ENCODE measurements at regions of chr14 and their contacts with region 1.

Region 1: DNA sequence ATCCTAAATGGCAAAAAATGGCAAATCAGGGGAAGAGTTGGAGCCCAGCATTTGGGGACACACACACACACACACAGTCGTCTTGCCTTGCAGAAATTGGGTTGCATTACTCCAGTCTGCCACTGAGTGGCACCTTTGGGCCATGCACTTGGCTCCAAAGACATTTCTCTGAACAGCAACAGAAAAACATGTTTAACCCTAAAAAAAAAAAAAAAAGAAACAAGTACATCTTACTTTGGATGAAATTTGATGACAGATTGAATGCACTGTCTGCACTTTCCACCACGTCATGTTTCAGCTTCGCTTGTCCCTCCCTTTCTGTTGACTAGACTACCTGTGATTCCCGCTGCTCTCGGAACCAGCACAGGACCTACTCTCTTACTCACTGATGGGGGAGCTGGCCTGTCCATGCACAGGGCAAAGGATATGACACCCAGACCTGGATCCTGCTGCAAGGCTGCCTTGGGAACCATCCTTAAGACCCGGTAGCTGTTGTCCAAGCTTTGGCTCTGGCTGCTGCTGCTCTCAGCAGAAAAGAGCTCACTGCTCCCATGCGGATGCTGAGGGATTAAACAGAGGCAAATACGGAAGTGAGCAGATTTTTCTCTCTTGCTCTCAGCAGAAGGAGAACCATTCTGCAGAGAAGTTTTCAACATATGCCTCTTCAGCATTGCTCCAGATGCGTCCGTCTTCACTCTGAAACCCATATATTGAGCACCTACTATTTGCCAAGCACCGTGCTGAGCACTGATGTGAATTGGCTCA is 376.8 kb downstream of the DPF3 start:
- DNase-seq: peak; percentile 23
- H3K4me3 ChIP-seq: no peak overlapping the region
- H3K27me3 ChIP-seq: peaks cover 1% of the 10 kb centered on the region; the same call in 1 of the 2 replicates
- CTCF ChIP-seq: peak; percentile 88

Region 2: GRCh38 chr14:72503696-72504368 is 13.3 kb before region 1 on chr14:
- CTCF ChIA-PET with region 1: interaction called, 43 read pairs
- POLR2A ChIA-PET with region 1: no interaction called
- DNase-seq: no peak
- H3K4me3 ChIP-seq: no peak overlapping the region
- H3K27me3 ChIP-seq: peaks cover under 1% of the 10 kb centered on the region; the same call in 1 of the 2 replicates
- CTCF ChIP-seq: no peak

Region 3: GRCh38 chr14:72893636-72894321 is 376.7 kb after region 1 on chr14 and contains the start of gene DPF3:
- CTCF ChIA-PET with region 1: interaction called, 44 read pairs
- POLR2A ChIA-PET with region 1: no interaction called
- DNase-seq: peak; percentile 77
- H3K4me3 ChIP-seq: peak within 1 kb of the TSS; percentile 56
- H3K27me3 ChIP-seq: no peaks in the 10 kb centered on the region
- CTCF ChIP-seq: no peak
- polyA plus RNA-seq, gene DPF3: 3.6 and 4.3 TPM in 2 replicates

Region 4: DNA sequence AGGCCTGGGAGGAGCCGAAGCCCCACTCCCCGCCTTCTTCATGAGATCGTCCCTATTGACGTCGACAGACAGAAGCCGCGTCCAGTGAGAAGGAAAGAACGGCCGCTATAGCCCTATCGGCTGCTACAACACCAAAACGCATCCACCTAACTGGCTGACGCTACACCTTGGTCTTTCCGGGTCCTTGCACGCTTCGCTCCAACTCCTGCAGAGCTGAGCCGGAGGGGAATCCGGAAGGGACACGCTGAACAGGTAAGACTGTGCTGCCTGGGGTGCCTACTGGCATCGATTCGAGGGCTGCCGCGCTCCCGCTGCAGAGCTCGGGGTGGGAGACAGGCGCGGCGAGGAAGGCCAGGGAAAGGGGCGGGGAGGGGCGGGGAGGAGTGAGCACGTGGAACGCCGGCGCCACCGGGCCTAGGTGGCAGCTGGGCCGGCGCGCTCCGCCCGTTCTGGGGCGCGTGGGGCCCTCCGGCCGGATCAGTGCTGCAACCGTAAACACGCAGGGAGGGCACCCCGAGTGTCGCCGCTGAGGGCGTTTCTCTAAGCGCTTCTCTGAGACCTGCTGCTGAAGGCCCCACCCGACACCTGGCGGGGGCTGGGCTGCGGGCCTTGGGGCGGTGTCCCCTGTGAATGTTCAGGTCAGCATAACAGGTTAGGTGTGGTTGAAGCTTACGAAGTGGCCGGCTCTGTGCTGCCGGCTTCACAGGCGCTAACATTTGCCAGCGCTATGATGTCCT is 409.3 kb after region 1 on chr14 and contains the start of gene DCAF4:
- CTCF ChIA-PET with region 1: interaction called, 21 read pairs
- POLR2A ChIA-PET with region 1: no interaction called
- DNase-seq: peak; percentile 94
- H3K4me3 ChIP-seq: peak within 1 kb of the TSS; percentile 99
- H3K27me3 ChIP-seq: no peaks in the 10 kb centered on the region
- CTCF ChIP-seq: no peak
- polyA plus RNA-seq, gene DCAF4: 22.9 and 29.2 TPM in 2 replicates

Region 5: GRCh38 chr14:72948481-72949138 is 431.5 kb after region 1 on chr14:
- CTCF ChIA-PET with region 1: interaction called, 292 read pairs
- POLR2A ChIA-PET with region 1: no interaction called
- DNase-seq: no peak
- H3K4me3 ChIP-seq: no peak overlapping the region
- H3K27me3 ChIP-seq: no peaks in the 10 kb centered on the region
- CTCF ChIP-seq: peak; percentile 86

Region 6: GRCh38 chr14:72962829-72963312 is 445.8 kb after region 1 on chr14:
- CTCF ChIA-PET with region 1: interaction called, 13 read pairs
- POLR2A ChIA-PET with region 1: no interaction called
- DNase-seq: peak; percentile 34
- H3K4me3 ChIP-seq: no peak overlapping the region
- H3K27me3 ChIP-seq: no peaks in the 10 kb centered on the region
- CTCF ChIP-seq: no peak

Measured in BJ (cell line).